Activated naive CD4-positive, alpha-beta T cell treated with anti-CD3 and anti-CD28 coated beads for 36 hours (primary cell): ENCODE measurements at regions of chr20 and their contacts with region 1.

Region 1: GRCh38 chr20:53001498-53002301 is 29.5 kb downstream of the TSHZ2 start:
- DNase-seq: peak; percentile 60
- H3K4me3 Mint-ChIP-seq: peak overlapping the region; percentile 71
- H3K27ac Mint-ChIP-seq: peak overlapping the region; percentile 99
- H3K4me1 Mint-ChIP-seq: peaks cover 88% of the 10 kb centered on the region
- H3K27me3 Mint-ChIP-seq: no peaks in the 10 kb centered on the region

Region 2: GRCh38 chr20:52402950-52403349 is 598.8 kb before region 1 on chr20:
- CTCF ChIA-PET with region 1: no interaction called
- intact Hi-C with region 1: loop called (anchors 1 kb)
- DNase-seq: no peak
- H3K4me3 Mint-ChIP-seq: no peak overlapping the region
- H3K27ac Mint-ChIP-seq: no peak overlapping the region
- H3K4me1 Mint-ChIP-seq: peaks cover 63% of the 10 kb centered on the region
- H3K27me3 Mint-ChIP-seq: no peaks in the 10 kb centered on the region

Region 3: DNA sequence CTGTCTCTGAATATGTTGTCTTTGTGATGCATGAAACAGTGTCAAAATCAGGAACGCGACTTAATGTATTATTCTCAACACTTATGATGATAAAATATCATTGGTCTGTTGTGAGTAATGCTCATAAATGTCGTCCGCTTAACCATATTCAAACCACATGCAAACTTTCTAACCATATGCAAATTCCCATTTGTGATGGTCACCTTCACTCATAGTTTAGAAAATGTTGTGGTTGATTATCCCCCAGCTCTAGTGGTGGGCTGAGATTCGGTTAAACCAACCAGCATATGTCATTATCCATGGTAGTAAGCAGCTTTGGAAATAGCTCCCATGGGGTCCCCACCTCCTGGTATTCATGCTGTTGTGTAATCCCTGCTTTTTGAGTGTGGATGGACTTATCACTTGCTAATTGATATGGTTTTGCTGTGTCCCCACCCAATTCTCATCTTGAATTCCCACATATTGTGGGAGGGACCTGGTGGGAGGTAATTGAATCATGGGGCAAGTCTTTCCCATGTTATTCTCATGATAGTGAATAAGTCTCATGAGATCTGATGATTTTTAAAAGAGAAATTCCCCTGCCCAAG is 389.6 kb before region 1 on chr20:
- CTCF ChIA-PET with region 1: no interaction called
- intact Hi-C with region 1: no loop called
- DNase-seq: no peak
- H3K4me3 Mint-ChIP-seq: no peak overlapping the region
- H3K27ac Mint-ChIP-seq: no peak overlapping the region
- H3K4me1 Mint-ChIP-seq: peaks cover 26% of the 10 kb centered on the region
- H3K27me3 Mint-ChIP-seq: no peaks in the 10 kb centered on the region

Region 4: GRCh38 chr20:52978851-52979250 is 22.8 kb before region 1 on chr20:
- CTCF ChIA-PET with region 1: interaction called, 7 read pairs
- intact Hi-C with region 1: loop called (anchors 1 kb)
- DNase-seq: no peak
- H3K4me3 Mint-ChIP-seq: peak overlapping the region; percentile 63
- H3K27ac Mint-ChIP-seq: peak overlapping the region; percentile 98
- H3K4me1 Mint-ChIP-seq: peaks cover 68% of the 10 kb centered on the region
- H3K27me3 Mint-ChIP-seq: no peaks in the 10 kb centered on the region

Region 5: GRCh38 chr20:53021934-53022333 is 20.2 kb after region 1 on chr20:
- CTCF ChIA-PET with region 1: interaction called, 6 read pairs
- intact Hi-C with region 1: loop called (anchors 1 kb)
- DNase-seq: peak; percentile 64
- H3K4me3 Mint-ChIP-seq: peak overlapping the region; percentile 29
- H3K27ac Mint-ChIP-seq: peak overlapping the region; percentile 93
- H3K4me1 Mint-ChIP-seq: peaks cover 85% of the 10 kb centered on the region
- H3K27me3 Mint-ChIP-seq: no peaks in the 10 kb centered on the region

Region 6: DNA sequence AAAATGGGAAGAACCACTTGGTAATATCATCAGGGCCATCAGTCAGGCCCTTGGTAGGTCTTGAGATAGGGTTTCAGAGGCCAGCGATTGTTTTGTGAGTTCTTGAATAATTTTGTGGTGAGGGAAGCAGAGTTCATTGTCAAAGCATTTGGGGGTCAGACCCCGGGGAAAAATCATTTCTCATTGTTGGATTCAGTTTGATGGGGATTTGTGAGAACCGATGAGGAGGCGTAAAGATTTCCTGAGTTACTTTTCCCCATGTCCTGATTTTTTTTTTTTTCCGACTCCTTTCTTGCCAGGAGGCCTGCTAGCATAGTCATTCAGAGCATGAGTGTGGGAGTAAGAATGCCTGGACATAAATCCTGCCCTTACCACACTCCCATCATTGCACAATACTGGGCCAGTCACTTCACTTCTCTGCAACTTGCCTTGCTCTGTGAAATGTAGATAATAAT is 30.8 kb after region 1 on chr20:
- CTCF ChIA-PET with region 1: no interaction called
- intact Hi-C with region 1: loop called (anchors 1 kb)
- DNase-seq: no peak
- H3K4me3 Mint-ChIP-seq: no peak overlapping the region
- H3K27ac Mint-ChIP-seq: no peak overlapping the region
- H3K4me1 Mint-ChIP-seq: peaks cover 70% of the 10 kb centered on the region
- H3K27me3 Mint-ChIP-seq: no peaks in the 10 kb centered on the region

Region 7: DNA sequence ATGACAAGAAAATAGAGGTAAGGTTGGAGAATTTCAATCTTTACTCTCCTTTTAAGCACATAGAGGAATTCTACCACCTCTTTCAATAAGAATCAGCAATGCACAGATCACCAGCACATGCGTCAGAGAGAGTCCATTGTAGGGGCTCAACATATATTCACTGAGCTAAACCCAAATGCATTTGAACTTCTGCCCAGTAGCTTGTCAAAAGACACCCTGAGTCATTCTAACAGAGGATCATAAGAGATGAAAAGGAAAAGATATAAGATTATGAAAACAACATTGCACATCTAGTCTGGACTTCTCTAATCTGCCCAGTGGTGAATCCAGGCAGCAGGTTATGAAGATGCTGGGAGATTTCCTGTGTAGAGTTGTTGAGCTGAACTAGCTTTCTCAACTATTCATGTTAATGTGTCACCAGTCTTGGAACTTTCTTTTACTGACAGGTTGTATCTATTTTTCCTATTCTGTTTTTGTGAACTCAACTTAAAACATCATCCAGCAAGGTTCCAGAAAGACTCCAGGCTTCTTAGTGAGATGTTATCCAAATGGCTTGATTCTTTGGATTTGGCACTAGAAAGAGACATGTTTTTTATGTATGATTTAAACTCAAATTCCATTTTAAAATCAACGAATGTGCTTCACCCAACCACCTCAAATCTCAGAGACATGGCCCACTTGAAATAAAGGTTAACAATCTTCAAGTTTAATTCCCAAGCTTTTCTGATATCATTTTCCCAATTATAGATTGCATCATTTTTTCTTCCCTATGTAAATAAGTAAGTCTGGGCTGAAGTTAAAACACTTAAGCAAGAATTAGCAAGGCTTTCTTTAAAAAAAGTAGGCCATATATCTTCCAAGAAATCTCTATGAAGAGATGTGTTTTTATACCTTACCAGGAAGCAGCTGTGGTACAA is 59.8 kb after region 1 on chr20:
- CTCF ChIA-PET with region 1: no interaction called
- intact Hi-C with region 1: loop called (anchors 2 kb)
- DNase-seq: peak; percentile 20
- H3K4me3 Mint-ChIP-seq: no peak overlapping the region
- H3K27ac Mint-ChIP-seq: peak overlapping the region; percentile 83
- H3K4me1 Mint-ChIP-seq: peaks cover 73% of the 10 kb centered on the region
- H3K27me3 Mint-ChIP-seq: no peaks in the 10 kb centered on the region

Region 8: GRCh38 chr20:53149148-53149889 is 147.6 kb after region 1 on chr20:
- CTCF ChIA-PET with region 1: interaction called, 4 read pairs
- intact Hi-C with region 1: loop called (anchors 1 kb)
- DNase-seq: no peak
- H3K4me3 Mint-ChIP-seq: peak overlapping the region; percentile 37
- H3K27ac Mint-ChIP-seq: peak overlapping the region; percentile 73
- H3K4me1 Mint-ChIP-seq: peaks cover 77% of the 10 kb centered on the region
- H3K27me3 Mint-ChIP-seq: no peaks in the 10 kb centered on the region